Aorta (tissue), 5 donors: ENCODE measurements at regions of chr6 and their contacts with region 1.

Region 1: DNA sequence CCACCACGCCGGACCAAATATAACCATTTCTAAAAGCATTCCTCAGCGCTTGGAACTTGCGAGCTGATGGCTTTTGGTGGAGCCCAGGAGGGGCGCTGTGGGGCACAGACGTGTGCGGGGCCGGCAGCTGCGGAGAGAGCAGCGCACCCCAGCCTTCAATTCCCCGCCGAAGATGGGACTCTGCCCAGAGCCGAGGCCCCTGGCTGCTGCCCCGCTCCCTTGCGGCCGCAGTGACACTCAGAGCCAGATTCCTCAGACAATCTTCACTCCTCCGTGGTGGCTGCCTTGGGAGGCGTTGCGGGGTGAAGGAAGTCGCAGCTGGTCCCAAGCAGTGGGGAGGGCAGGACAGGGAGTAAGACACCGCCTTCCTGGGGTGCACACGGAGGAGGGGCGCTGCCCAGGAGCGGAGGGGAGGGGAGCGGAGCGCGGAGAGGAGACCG is 87.7 kb downstream of the TMEM242 start:
- DNase-seq: peak; percentile 84 to 91
- ATAC-seq: peak; percentile 89
- H3K4me3 ChIP-seq: peak overlapping the region; percentile 2 to 17
- H3K27ac ChIP-seq: peak overlapping the region; percentile 70 to 94
- H3K4me1 ChIP-seq: no peaks in the 10 kb centered on the region
- H3K27me3 ChIP-seq: no peaks in the 10 kb centered on the region

Region 2: GRCh38 chr6:157059781-157060180 is 175.8 kb before region 1 on chr6:
- intact Hi-C with region 1: no loop called
- DNase-seq: no peak
- ATAC-seq: no peak
- H3K4me3 ChIP-seq: no peak overlapping the region
- H3K27ac ChIP-seq: no peak overlapping the region
- H3K4me1 ChIP-seq: no peaks in the 10 kb centered on the region
- H3K27me3 ChIP-seq: no peaks in the 10 kb centered on the region

Region 3: GRCh38 chr6:157198419-157199279 is 37.0 kb before region 1 on chr6:
- intact Hi-C with region 1: loop called in 1 of 2 experiments (anchors 5 kb)
- DNase-seq: peak; percentile 78 to 86
- ATAC-seq: peak; percentile 81
- H3K4me3 ChIP-seq: peak overlapping the region in 1 of 2 donors; percentile 1
- H3K27ac ChIP-seq: peak overlapping the region; percentile 45 to 80
- H3K4me1 ChIP-seq: no peaks in the 10 kb centered on the region
- H3K27me3 ChIP-seq: no peaks in the 10 kb centered on the region

Region 4: GRCh38 chr6:157274471-157275226 is 39.0 kb after region 1 on chr6:
- intact Hi-C with region 1: loop called (anchors 5 kb)
- DNase-seq: peak; percentile 78 to 93
- ATAC-seq: peak; percentile 97
- H3K4me3 ChIP-seq: peak overlapping the region; percentile 48 to 71
- H3K27ac ChIP-seq: peak overlapping the region in 1 of 2 donors; percentile 90
- H3K4me1 ChIP-seq: no peaks in the 10 kb centered on the region
- H3K27me3 ChIP-seq: no peaks in the 10 kb centered on the region